ENCODE measurements at regions of chr6 and their contacts with region 1.

Region 1: GRCh38 chr6:109095027-109095834 is at the start of gene CEP57L1:
- DNase-seq: peak; percentile 89 to 98 (median 92)
- ATAC-seq: peak; percentile 81
- H3K4me3 ChIP-seq: peak within 1 kb of the TSS; percentile 80
- H3K4me3 Mint-ChIP-seq: peak within 1 kb of the TSS; percentile 96
- H3K27ac ChIP-seq: peak within 1 kb of the TSS; percentile 95 to 98
- H3K27ac Mint-ChIP-seq: peak within 1 kb of the TSS; percentile 98
- H3K4me1 ChIP-seq: peaks cover 15% of the 10 kb centered on the region
- H3K4me1 Mint-ChIP-seq: peaks cover 56% of the 10 kb centered on the region
- H3K27me3 ChIP-seq: no peaks in the 10 kb centered on the region
- H3K27me3 Mint-ChIP-seq: no peaks in the 10 kb centered on the region
- CTCF ChIP-seq: no peak
- total RNA-seq, gene CEP57L1: 3.8 to 4.8 TPM

Region 2: GRCh38 chr6:107957909-107958688 is 1137.1 kb before region 1 on chr6 and contains the start of gene SEC63:
- CTCF ChIA-PET with region 1: no interaction called
- POLR2A ChIA-PET with region 1: interaction called, 5 read pairs
- intact Hi-C with region 1: loop called in 1 of 2 experiments (anchors 10 kb)
- DNase-seq: peak; percentile 94 to 98 (median 97)
- ATAC-seq: peak; percentile 97
- H3K4me3 ChIP-seq: peak within 1 kb of the TSS; percentile 81
- H3K4me3 Mint-ChIP-seq: peak within 1 kb of the TSS; percentile 99
- H3K27ac ChIP-seq: peak within 1 kb of the TSS; percentile 46 to 61
- H3K27ac Mint-ChIP-seq: peak within 1 kb of the TSS; percentile 82
- H3K4me1 ChIP-seq: peaks cover 16% of the 10 kb centered on the region
- H3K4me1 Mint-ChIP-seq: peaks cover 32% of the 10 kb centered on the region
- H3K27me3 ChIP-seq: no peaks in the 10 kb centered on the region
- H3K27me3 Mint-ChIP-seq: no peaks in the 10 kb centered on the region
- CTCF ChIP-seq: no peak
- total RNA-seq, gene SEC63: 80.3 to 86.7 TPM

Region 3: DNA sequence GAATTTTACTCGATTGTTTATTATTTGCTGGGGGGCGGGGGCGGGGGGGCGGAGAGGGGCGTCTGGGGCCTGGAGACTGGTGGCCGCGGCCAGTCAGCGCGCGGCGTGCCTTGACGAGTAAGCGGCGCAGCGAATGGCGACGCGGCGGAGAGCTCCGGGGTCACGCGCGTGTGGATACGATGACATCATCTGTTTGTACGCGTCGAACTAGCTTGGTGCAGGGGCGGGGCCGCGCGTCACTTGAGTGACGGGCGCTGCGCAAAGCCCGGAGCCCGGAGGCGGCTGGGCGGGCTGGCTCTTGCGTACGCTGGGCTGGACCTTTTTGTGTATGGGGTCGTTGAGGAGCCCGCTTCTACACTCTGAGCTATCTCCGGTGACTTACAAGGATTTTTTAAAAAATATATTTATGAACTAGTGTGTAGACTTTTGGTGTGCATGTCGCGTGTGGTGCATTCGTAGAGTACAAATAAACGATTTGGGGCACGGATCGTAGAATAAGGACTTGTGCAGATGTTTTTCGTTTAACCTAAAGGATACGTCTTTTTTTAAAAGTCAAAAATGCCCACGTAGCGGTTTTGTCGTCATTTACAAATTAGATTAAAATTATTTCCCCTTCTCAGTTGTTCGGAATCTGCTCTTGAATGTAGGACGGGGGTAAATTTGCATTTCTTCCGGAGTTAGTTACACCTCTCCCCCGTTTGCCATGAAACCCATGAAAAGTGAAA is 536.7 kb before region 1 on chr6:
- CTCF ChIA-PET with region 1: no interaction called
- POLR2A ChIA-PET with region 1: interaction called, 102 read pairs
- intact Hi-C with region 1: loop called (anchors 2 kb)
- DNase-seq: peak; percentile 93 to 100 (median 97)
- ATAC-seq: peak; percentile 67
- H3K4me3 ChIP-seq: peak overlapping the region; percentile 99
- H3K4me3 Mint-ChIP-seq: peak overlapping the region; percentile 99
- H3K27ac ChIP-seq: peak overlapping the region; percentile 99 to 100
- H3K27ac Mint-ChIP-seq: peak overlapping the region; percentile 100
- H3K4me1 ChIP-seq: peaks cover 29% of the 10 kb centered on the region
- H3K4me1 Mint-ChIP-seq: peaks cover 20% of the 10 kb centered on the region
- H3K27me3 ChIP-seq: no peaks in the 10 kb centered on the region
- H3K27me3 Mint-ChIP-seq: no peaks in the 10 kb centered on the region
- CTCF ChIP-seq: no peak

Region 4: GRCh38 chr6:109073344-109074132 is 21.7 kb before region 1 on chr6:
- CTCF ChIA-PET with region 1: interaction called, 5 read pairs
- POLR2A ChIA-PET with region 1: interaction called, 38 read pairs
- intact Hi-C with region 1: no loop called
- DNase-seq: peak in 11 of 14 experiments; percentile 17 to 87 (median 37)
- ATAC-seq: peak; percentile 74
- H3K4me3 ChIP-seq: no peak overlapping the region
- H3K4me3 Mint-ChIP-seq: peak overlapping the region; percentile 0
- H3K27ac ChIP-seq: no peak overlapping the region
- H3K27ac Mint-ChIP-seq: no peak overlapping the region
- H3K4me1 ChIP-seq: peaks cover 8% of the 10 kb centered on the region
- H3K4me1 Mint-ChIP-seq: peaks cover 25% of the 10 kb centered on the region
- H3K27me3 ChIP-seq: no peaks in the 10 kb centered on the region
- H3K27me3 Mint-ChIP-seq: no peaks in the 10 kb centered on the region
- CTCF ChIP-seq: peak; percentile 85

Region 5: GRCh38 chr6:109165392-109165974 is 70.3 kb after region 1 on chr6:
- CTCF ChIA-PET with region 1: no interaction called
- POLR2A ChIA-PET with region 1: no interaction called
- intact Hi-C with region 1: no loop called
- DNase-seq: no peak
- ATAC-seq: no peak
- H3K4me3 ChIP-seq: no peak overlapping the region
- H3K4me3 Mint-ChIP-seq: no peak overlapping the region
- H3K27ac ChIP-seq: no peak overlapping the region
- H3K27ac Mint-ChIP-seq: no peak overlapping the region
- H3K4me1 ChIP-seq: no peaks in the 10 kb centered on the region
- H3K4me1 Mint-ChIP-seq: no peaks in the 10 kb centered on the region
- H3K27me3 ChIP-seq: no peaks in the 10 kb centered on the region
- H3K27me3 Mint-ChIP-seq: no peaks in the 10 kb centered on the region
- CTCF ChIP-seq: no peak

Region 6: GRCh38 chr6:109690737-109691621 is 595.7 kb after region 1 on chr6 and contains the starts of genes AK9 and FIG4:
- CTCF ChIA-PET with region 1: no interaction called
- POLR2A ChIA-PET with region 1: interaction called, 6 read pairs
- intact Hi-C with region 1: loop called in 1 of 2 experiments (anchors 5 kb)
- DNase-seq: peak; percentile 76 to 94 (median 88)
- ATAC-seq: peak; percentile 96
- H3K4me3 ChIP-seq: peak within 1 kb of the TSS; percentile 88
- H3K4me3 Mint-ChIP-seq: peak within 1 kb of the TSS; percentile 96
- H3K27ac ChIP-seq: peak within 1 kb of the TSS; percentile 59 to 71
- H3K27ac Mint-ChIP-seq: peak within 1 kb of the TSS; percentile 95
- H3K4me1 ChIP-seq: peaks cover 13% of the 10 kb centered on the region
- H3K4me1 Mint-ChIP-seq: peaks cover 34% of the 10 kb centered on the region
- H3K27me3 ChIP-seq: no peaks in the 10 kb centered on the region
- H3K27me3 Mint-ChIP-seq: no peaks in the 10 kb centered on the region
- CTCF ChIP-seq: peak; percentile 27
- total RNA-seq, gene AK9: 5.3 to 6.6 TPM
- total RNA-seq, gene FIG4: 3.3 to 4.0 TPM

Region 7: DNA sequence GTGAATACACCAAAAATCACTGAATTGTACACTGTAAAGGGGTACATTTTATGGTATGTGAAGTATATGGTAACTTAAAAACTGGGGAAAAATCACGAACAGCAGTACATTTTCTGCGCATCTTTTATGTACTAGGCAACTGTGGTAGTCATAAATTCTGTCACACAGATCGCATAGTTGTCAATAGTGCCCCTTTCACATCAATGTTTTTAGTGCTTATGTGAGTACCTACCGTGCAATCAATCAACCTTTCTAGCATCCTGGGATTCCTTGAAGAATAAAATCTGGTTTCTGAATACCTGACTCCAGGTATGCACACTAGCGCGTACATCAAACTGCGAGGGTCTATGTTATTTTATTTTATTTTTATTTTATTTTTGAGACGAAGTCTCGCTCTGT is 1886.0 kb after region 1 on chr6:
- CTCF ChIA-PET with region 1: no interaction called
- POLR2A ChIA-PET with region 1: no interaction called
- intact Hi-C with region 1: loop called in 1 of 2 experiments (anchors 5 kb)
- DNase-seq: peak in 1 of 14 experiments; percentile 43
- ATAC-seq: peak; percentile 1
- H3K4me3 ChIP-seq: peak overlapping the region; percentile 99
- H3K4me3 Mint-ChIP-seq: peak overlapping the region; percentile 99
- H3K27ac ChIP-seq: peak overlapping the region; percentile 77 to 97
- H3K27ac Mint-ChIP-seq: peak overlapping the region; percentile 99
- H3K4me1 ChIP-seq: peaks cover 14% of the 10 kb centered on the region
- H3K4me1 Mint-ChIP-seq: peaks cover 49% of the 10 kb centered on the region
- H3K27me3 ChIP-seq: no peaks in the 10 kb centered on the region
- H3K27me3 Mint-ChIP-seq: no peaks in the 10 kb centered on the region
- CTCF ChIP-seq: no peak

Measured in CD4-positive, alpha-beta T cell (primary cell).